MCF 10A (cell line): ENCODE measurements at regions of chr11 and their contacts with region 1.

Region 1: DNA sequence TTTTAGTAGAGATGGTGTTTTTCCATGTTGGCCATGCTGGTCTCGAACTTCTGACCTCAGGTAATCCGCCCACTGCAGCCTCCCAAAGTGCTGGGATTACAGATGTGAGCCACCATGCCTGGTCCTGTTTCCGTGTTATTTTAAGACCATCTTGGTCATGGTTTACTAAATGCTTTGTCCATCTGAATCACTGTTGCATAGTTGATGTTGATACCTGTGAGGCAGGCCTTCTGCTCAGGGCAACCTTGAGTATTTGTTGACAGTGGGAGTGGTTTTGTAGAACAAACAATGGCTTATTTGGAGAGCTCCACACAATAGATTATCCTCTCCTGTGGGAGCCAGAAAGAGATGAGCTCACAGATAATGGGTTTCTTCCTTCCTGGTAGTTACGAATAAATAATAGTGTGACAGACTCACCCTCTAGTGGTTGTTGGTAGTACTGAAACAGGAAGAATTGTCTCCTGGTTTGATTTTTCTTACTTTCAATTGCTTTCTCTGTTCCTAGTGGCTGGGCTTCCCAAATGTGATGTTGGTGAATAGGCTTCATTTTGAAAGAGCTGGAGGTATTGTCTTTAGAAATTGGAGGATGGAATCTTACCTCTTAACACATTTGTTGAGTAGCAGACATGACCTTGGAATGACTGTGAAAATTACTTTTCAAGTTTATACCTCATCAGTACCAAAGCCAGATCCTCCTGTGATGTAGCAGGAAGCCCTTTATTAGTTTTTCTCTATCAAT is 39.0 kb downstream of the CTNND1 start:
- DNase-seq: peak; percentile 76
- H3K4me3 Mint-ChIP-seq: no peak overlapping the region
- H3K27ac Mint-ChIP-seq: no peak overlapping the region
- H3K4me1 Mint-ChIP-seq: peaks cover 20% of the 10 kb centered on the region
- H3K27me3 Mint-ChIP-seq: no peaks in the 10 kb centered on the region
- CTCF ChIP-seq: peak; percentile 71

Region 2: GRCh38 chr11:57712256-57713150 is 88.1 kb before region 1 on chr11 and contains the start of gene TMX2:
- CTCF ChIA-PET with region 1: interaction called, 25 read pairs
- POLR2A ChIA-PET with region 1: interaction called, 12 read pairs
- intact Hi-C with region 1: loop called (anchors 1 kb)
- DNase-seq: peak; percentile 99
- H3K4me3 Mint-ChIP-seq: peak within 1 kb of the TSS; percentile 90
- H3K27ac Mint-ChIP-seq: peak within 1 kb of the TSS; percentile 81
- H3K4me1 Mint-ChIP-seq: peaks cover 22% of the 10 kb centered on the region
- H3K27me3 Mint-ChIP-seq: no peaks in the 10 kb centered on the region
- CTCF ChIP-seq: no peak
- total RNA-seq, gene TMX2: 145 and 161 TPM in 2 replicates

Region 3: DNA sequence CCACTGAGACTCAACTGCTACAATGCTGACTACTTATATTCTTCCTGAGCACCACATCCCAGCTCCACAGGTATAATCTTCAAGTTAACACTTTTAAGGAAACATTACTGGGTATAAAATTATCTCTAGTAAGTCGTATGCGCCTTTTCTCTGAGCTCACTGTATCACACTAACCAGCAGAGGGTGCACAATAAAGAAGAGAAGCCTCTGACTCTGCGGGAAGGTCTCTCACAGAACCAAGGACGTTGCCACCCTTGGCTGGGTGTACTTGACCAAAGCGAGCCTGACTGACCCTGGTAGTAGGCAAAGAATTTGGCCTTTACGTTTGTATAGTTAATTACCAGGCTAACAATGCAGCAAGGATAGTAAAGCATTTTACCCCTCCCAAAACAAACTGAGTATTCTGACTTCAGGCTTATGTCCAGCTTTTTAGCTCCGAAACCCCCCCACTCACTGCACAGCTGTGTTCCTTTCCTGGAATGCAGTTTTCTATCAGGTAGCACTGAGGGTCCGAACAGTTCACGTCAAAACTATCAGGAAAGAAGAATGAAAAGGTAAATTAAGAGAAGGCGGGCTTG is 48.8 kb before region 1 on chr11 and contains the start of gene BTBD18:
- CTCF ChIA-PET with region 1: interaction called, 312 read pairs
- POLR2A ChIA-PET with region 1: interaction called, 6 read pairs
- intact Hi-C with region 1: loop called (anchors 2 kb)
- DNase-seq: peak; percentile 51
- H3K4me3 Mint-ChIP-seq: no peak within 1 kb of the TSS
- H3K27ac Mint-ChIP-seq: no peak within 1 kb of the TSS
- H3K4me1 Mint-ChIP-seq: no peaks in the 10 kb centered on the region
- H3K27me3 Mint-ChIP-seq: no peaks in the 10 kb centered on the region
- CTCF ChIP-seq: peak; percentile 45
- total RNA-seq, gene BTBD18: not detected in 2 replicates

Region 4: DNA sequence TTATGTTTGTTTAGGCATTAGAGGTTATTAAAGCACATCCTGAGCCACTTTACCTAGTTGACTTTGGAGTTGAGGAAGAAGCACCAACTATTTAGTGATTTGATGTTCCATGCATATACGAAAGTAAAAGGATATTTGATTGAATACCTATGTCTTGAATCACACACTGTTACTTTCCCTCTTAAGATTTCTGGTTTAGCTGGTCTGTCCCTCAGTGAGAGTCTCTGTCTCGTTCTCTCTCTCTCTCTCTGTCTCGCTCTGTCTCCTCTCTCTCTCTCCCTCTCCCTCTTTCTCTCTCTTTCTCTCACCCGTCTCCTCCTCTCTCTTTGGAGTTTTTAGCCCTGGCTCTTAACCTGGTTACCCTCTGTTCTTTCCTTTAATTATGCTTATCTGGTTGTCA is 28.1 kb before region 1 on chr11:
- CTCF ChIA-PET with region 1: interaction called, 44 read pairs
- POLR2A ChIA-PET with region 1: interaction called, 60 read pairs
- intact Hi-C with region 1: no loop called
- DNase-seq: no peak
- H3K4me3 Mint-ChIP-seq: peak overlapping the region; percentile 28
- H3K27ac Mint-ChIP-seq: peak overlapping the region; percentile 81
- H3K4me1 Mint-ChIP-seq: peaks cover 53% of the 10 kb centered on the region
- H3K27me3 Mint-ChIP-seq: no peaks in the 10 kb centered on the region
- CTCF ChIP-seq: no peak

Region 5: GRCh38 chr11:57785072-57785471 is 15.5 kb before region 1 on chr11:
- CTCF ChIA-PET with region 1: interaction called, 44 read pairs
- POLR2A ChIA-PET with region 1: interaction called, 60 read pairs
- intact Hi-C with region 1: no loop called
- DNase-seq: no peak
- H3K4me3 Mint-ChIP-seq: no peak overlapping the region
- H3K27ac Mint-ChIP-seq: peak overlapping the region; percentile 31
- H3K4me1 Mint-ChIP-seq: peaks cover 37% of the 10 kb centered on the region
- H3K27me3 Mint-ChIP-seq: no peaks in the 10 kb centered on the region
- CTCF ChIP-seq: no peak

Region 6: GRCh38 chr11:57842873-57843272 is 42.3 kb after region 1 on chr11:
- CTCF ChIA-PET with region 1: no interaction called
- POLR2A ChIA-PET with region 1: no interaction called
- intact Hi-C with region 1: no loop called
- DNase-seq: no peak
- H3K4me3 Mint-ChIP-seq: no peak overlapping the region
- H3K27ac Mint-ChIP-seq: no peak overlapping the region
- H3K4me1 Mint-ChIP-seq: no peaks in the 10 kb centered on the region
- H3K27me3 Mint-ChIP-seq: no peaks in the 10 kb centered on the region
- CTCF ChIP-seq: no peak

Region 7: GRCh38 chr11:58059007-58059350 is 258.4 kb after region 1 on chr11:
- CTCF ChIA-PET with region 1: interaction called, 11 read pairs
- POLR2A ChIA-PET with region 1: no interaction called
- intact Hi-C with region 1: no loop called
- DNase-seq: peak; percentile 64
- H3K4me3 Mint-ChIP-seq: no peak overlapping the region
- H3K27ac Mint-ChIP-seq: peak overlapping the region; percentile 46
- H3K4me1 Mint-ChIP-seq: peaks cover 16% of the 10 kb centered on the region
- H3K27me3 Mint-ChIP-seq: no peaks in the 10 kb centered on the region
- CTCF ChIP-seq: no peak

Region 8: GRCh38 chr11:58513747-58514367 is 713.2 kb after region 1 on chr11:
- CTCF ChIA-PET with region 1: interaction called, 8 read pairs
- POLR2A ChIA-PET with region 1: no interaction called
- intact Hi-C with region 1: loop called (anchors 5 kb)
- DNase-seq: peak; percentile 76
- H3K4me3 Mint-ChIP-seq: no peak overlapping the region
- H3K27ac Mint-ChIP-seq: no peak overlapping the region
- H3K4me1 Mint-ChIP-seq: peaks cover 5% of the 10 kb centered on the region
- H3K27me3 Mint-ChIP-seq: peaks cover 10% of the 10 kb centered on the region
- CTCF ChIP-seq: peak; percentile 75